ENCODE measurements at regions of chr20 and their contacts with region 1.

Region 1: DNA sequence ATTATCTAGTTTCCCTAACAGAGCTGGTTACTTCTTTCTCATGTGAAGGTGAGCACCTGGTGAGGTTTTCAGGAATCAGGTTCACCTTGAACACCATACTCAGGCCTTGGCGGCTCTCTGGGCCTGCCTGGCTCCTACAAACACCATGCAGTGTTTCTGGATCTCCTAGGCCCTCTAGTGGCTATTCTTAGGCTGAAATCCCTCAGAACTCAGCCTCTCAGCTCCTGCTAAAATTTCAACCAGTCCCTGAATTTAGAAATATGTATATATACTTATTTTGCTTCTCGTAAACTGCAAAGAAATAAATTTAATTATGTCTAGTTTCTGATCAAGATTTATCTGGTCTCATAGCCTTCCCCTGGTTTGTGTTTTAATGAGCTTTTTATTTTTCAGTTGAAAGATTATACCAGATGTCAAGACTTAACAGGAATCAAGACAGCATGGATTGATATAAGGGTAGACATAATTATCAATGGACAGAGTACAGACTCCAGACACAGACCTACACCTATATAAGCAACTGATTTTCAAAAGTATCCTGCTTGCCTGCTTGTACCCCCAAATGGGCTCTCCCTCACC is 55.9 kb downstream of the ANKEF1 start:
- DNase-seq: peak; percentile 18
- H3K4me3 ChIP-seq: no peak overlapping the region
- H3K27ac ChIP-seq: no peak overlapping the region
- H3K27me3 ChIP-seq: no peaks in the 10 kb centered on the region
- CTCF ChIP-seq: peak; percentile 91

Region 2: DNA sequence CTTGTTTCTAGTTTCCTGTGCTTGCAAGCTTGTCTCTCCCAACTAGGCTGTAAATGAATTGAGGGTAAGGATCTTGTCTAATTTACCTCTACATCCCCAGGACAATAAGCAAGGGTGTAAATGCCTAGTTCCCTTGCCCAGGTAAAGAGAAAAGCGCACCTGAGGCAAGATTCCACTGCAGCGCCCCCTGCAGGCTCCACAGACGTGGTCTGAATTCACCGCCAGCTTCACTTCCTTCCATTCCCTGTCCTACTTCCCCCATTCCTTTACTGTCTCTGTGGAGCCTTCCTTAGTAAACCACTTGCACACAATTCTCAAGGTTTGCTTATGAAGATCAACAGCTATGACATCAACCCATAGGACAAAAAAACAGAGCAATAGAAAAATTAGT is 13.6 kb before region 1 on chr20:
- CTCF ChIA-PET with region 1: interaction called, 20 read pairs
- POLR2A ChIA-PET with region 1: no interaction called
- DNase-seq: no peak
- H3K4me3 ChIP-seq: no peak overlapping the region
- H3K27ac ChIP-seq: no peak overlapping the region
- H3K27me3 ChIP-seq: no peaks in the 10 kb centered on the region
- CTCF ChIP-seq: peak; percentile 27

Region 3: DNA sequence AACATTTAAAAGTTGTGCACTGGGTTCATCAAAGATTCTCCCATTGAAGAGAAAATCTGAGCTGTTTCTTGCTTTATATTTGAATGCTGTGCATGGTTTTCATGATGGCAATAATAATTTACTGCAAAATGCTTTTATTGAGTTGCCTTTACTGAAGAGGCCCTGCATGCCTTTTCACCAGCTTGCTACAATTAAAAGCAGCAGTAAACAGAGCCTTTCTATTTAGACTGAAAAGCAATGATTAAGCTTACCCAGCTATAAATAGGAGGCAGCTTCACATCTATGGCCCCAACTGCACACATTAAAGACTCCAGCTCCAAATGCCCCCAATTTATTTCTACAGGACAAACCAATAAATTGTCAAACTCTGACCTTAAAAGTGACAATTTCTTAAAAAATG is 14.4 kb after region 1 on chr20:
- CTCF ChIA-PET with region 1: interaction called, 16 read pairs
- POLR2A ChIA-PET with region 1: no interaction called
- DNase-seq: no peak
- H3K4me3 ChIP-seq: no peak overlapping the region
- H3K27ac ChIP-seq: no peak overlapping the region
- H3K27me3 ChIP-seq: no peaks in the 10 kb centered on the region
- CTCF ChIP-seq: no peak

Region 4: DNA sequence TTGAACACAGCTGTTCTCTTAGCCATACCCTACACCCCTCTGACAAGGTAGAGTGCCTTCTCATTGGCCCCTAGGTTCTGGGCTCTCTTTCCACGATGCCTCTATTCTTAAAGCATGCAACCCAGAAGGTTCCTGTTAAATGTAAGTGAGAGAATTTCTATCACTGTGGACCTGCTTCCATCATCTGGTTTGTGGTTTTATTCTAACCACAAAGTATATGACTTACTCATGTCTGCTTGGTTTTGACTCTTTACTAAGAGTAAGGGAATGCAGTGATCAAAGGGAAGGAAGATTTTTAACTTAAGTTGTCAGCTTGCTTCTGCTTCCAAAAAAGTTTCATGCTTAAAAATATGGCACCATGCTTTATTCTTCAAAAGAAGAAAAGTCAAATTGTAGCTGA is 24.3 kb after region 1 on chr20:
- CTCF ChIA-PET with region 1: interaction called, 14 read pairs
- POLR2A ChIA-PET with region 1: interaction called, 7 read pairs
- DNase-seq: peak; percentile 84
- H3K4me3 ChIP-seq: no peak overlapping the region
- H3K27ac ChIP-seq: no peak overlapping the region
- H3K27me3 ChIP-seq: no peaks in the 10 kb centered on the region
- CTCF ChIP-seq: no peak

Region 5: DNA sequence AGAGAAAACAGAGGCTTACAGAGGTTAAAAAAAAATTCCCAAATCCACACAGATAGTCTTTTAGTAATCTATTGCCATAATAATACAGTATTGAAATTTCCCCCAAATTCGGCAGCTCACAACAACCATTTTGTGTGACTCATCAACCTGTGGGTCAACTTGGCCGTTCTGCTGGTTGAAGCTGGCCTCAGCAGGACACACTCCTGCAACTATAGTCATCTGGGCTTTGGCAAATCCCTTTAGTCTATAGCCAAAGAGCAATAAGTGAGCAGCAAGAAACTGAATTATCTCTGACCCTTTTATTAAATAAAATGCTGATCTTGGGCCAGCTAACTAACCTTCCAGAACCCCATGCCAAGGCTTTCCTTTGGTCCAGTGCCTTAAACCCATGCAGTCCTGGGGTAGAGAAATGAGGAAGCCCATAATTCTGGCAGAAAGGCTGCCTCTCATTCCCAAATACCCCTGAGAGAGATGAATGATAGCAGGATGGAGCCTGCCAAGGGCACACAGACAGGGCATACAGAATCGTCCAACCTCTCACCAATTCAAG is 110.7 kb after region 1 on chr20:
- CTCF ChIA-PET with region 1: interaction called, 11 read pairs
- POLR2A ChIA-PET with region 1: no interaction called
- DNase-seq: no peak
- H3K4me3 ChIP-seq: no peak overlapping the region
- H3K27ac ChIP-seq: no peak overlapping the region
- H3K27me3 ChIP-seq: no peaks in the 10 kb centered on the region
- CTCF ChIP-seq: no peak

Region 6: GRCh38 chr20:10357974-10358373 is 267.3 kb after region 1 on chr20:
- CTCF ChIA-PET with region 1: interaction called, 13 read pairs
- POLR2A ChIA-PET with region 1: no interaction called
- DNase-seq: no peak
- H3K4me3 ChIP-seq: no peak overlapping the region
- H3K27ac ChIP-seq: no peak overlapping the region
- H3K27me3 ChIP-seq: no peaks in the 10 kb centered on the region
- CTCF ChIP-seq: peak; percentile 59

Region 7: GRCh38 chr20:10427060-10427692 is 336.5 kb after region 1 on chr20:
- CTCF ChIA-PET with region 1: interaction called, 60 read pairs
- POLR2A ChIA-PET with region 1: no interaction called
- DNase-seq: peak; percentile 34
- H3K4me3 ChIP-seq: no peak overlapping the region
- H3K27ac ChIP-seq: no peak overlapping the region
- H3K27me3 ChIP-seq: no peaks in the 10 kb centered on the region
- CTCF ChIP-seq: peak; percentile 90

Measured in AG04450 (cell line).